MCF 10A (cell line): ENCODE measurements at regions of chr17 and their contacts with region 1.

Region 1: GRCh38 chr17:21511363-21512198 is 135.4 kb downstream of the KCNJ12 start:
- DNase-seq: peak; percentile 68
- H3K4me3 Mint-ChIP-seq: no peak overlapping the region
- H3K27ac Mint-ChIP-seq: no peak overlapping the region
- H3K4me1 Mint-ChIP-seq: no peaks in the 10 kb centered on the region
- H3K27me3 Mint-ChIP-seq: peaks cover 15% of the 10 kb centered on the region
- CTCF ChIP-seq: peak; percentile 74

Region 2: GRCh38 chr17:21119247-21119918 is 392.2 kb before region 1 on chr17:
- CTCF ChIA-PET with region 1: interaction called, 11 read pairs
- POLR2A ChIA-PET with region 1: no interaction called
- intact Hi-C with region 1: loop called (anchors 2 kb)
- DNase-seq: peak; percentile 68
- H3K4me3 Mint-ChIP-seq: no peak overlapping the region
- H3K27ac Mint-ChIP-seq: no peak overlapping the region
- H3K4me1 Mint-ChIP-seq: peaks cover 6% of the 10 kb centered on the region
- H3K27me3 Mint-ChIP-seq: no peaks in the 10 kb centered on the region
- CTCF ChIP-seq: peak; percentile 82

Region 3: GRCh38 chr17:21275579-21276263 is 235.9 kb before region 1 on chr17:
- CTCF ChIA-PET with region 1: interaction called, 52 read pairs
- POLR2A ChIA-PET with region 1: no interaction called
- intact Hi-C with region 1: loop called (anchors 1 kb)
- DNase-seq: peak; percentile 80
- H3K4me3 Mint-ChIP-seq: peak overlapping the region; percentile 77
- H3K27ac Mint-ChIP-seq: peak overlapping the region; percentile 75
- H3K4me1 Mint-ChIP-seq: peaks cover 19% of the 10 kb centered on the region
- H3K27me3 Mint-ChIP-seq: no peaks in the 10 kb centered on the region
- CTCF ChIP-seq: no peak

Region 4: GRCh38 chr17:21318439-21318838 is 193.1 kb before region 1 on chr17:
- CTCF ChIA-PET with region 1: no interaction called
- POLR2A ChIA-PET with region 1: no interaction called
- intact Hi-C with region 1: loop called (anchors 10 kb)
- DNase-seq: no peak
- H3K4me3 Mint-ChIP-seq: no peak overlapping the region
- H3K27ac Mint-ChIP-seq: no peak overlapping the region
- H3K4me1 Mint-ChIP-seq: no peaks in the 10 kb centered on the region
- H3K27me3 Mint-ChIP-seq: no peaks in the 10 kb centered on the region
- CTCF ChIP-seq: no peak

Region 5: DNA sequence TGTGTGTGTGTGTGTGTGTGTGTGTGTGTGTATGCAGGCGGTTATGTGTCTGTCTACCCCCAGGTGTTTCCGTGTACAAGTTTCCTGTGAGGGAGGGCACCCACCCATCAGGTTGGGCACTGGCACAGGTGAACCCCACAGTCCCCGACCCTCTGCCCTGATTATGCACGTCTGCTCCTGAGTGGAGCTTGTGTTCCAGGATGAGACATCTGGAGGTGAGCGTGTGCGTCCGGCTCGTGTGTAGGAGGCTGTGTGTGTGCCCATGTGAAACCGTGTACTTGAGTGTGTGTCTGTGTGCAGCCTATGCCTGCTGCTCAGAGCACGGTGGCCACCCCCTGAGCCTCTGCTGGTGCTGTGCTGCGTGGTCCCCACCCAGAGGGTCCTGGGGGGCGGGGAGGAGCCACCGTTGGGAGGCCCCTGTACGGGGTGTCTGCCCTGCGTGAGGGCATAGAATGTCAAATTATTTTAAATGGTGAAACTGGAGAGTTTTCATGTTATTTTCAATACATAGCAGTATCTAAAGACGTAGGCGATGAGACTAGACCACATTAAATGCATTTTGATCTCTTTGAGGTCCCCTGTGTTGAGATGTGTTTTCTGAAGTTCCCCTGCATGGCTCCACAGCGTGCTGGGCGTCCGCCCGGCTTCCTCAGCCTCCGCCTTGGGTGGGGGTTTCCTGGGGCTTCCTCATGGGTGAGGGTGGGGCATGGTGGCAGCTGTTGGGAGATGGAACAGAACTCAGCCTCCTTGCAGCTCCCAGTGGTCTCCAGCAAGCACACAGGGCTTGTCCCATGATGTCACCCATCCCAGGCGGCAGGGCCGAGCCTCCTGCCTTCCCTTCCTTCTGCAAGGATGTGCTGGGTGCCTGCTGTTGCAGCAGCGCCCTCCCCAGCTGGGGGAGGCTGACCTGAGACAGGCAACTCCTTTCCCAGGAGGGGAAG is 92.0 kb before region 1 on chr17:
- CTCF ChIA-PET with region 1: no interaction called
- POLR2A ChIA-PET with region 1: no interaction called
- intact Hi-C with region 1: no loop called
- DNase-seq: no peak
- H3K4me3 Mint-ChIP-seq: no peak overlapping the region
- H3K27ac Mint-ChIP-seq: no peak overlapping the region
- H3K4me1 Mint-ChIP-seq: no peaks in the 10 kb centered on the region
- H3K27me3 Mint-ChIP-seq: no peaks in the 10 kb centered on the region
- CTCF ChIP-seq: no peak

Region 6: DNA sequence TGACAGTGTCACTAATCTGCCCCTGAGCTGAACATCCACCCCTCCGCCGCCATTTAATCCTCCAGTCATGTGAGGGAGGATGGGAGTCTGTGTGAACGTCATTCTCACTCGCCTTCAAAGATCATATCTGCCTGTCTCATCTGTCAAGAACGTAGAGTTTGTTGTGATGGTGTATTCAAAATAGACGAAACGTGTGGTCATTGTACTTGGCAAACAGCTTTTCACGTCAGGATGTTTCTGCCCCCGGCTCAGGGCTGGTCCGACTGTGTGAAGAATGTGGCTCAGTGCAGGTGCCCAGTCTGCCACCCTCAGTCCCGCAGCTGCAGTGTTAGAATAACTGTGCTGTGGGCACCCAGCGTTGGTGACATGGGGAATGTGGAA is 12.6 kb after region 1 on chr17:
- CTCF ChIA-PET with region 1: interaction called, 43 read pairs
- POLR2A ChIA-PET with region 1: no interaction called
- intact Hi-C with region 1: no loop called
- DNase-seq: no peak
- H3K4me3 Mint-ChIP-seq: no peak overlapping the region
- H3K27ac Mint-ChIP-seq: no peak overlapping the region
- H3K4me1 Mint-ChIP-seq: no peaks in the 10 kb centered on the region
- H3K27me3 Mint-ChIP-seq: no peaks in the 10 kb centered on the region
- CTCF ChIP-seq: no peak

Region 7: DNA sequence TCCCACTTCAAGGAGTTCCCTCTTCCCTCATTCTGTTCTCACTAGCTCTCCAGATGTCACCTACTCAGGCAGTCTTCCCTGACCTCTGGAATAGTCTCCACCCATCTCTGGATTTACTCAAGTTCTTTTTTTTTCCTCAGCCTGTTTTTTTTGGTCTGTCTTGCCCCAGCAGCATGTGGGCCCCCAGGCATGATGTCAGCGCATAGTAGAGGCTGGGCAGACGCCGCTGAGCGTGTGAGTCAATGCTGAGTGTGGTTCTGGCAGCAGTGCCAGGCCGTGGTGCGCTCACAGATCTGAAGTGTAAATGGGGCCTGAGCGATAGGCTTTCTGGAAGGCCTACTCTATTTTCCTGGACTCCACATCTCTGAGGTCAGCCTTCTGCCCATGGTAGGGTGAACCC is 178.0 kb after region 1 on chr17:
- CTCF ChIA-PET with region 1: no interaction called
- POLR2A ChIA-PET with region 1: no interaction called
- intact Hi-C with region 1: no loop called
- DNase-seq: peak; percentile 72
- H3K4me3 Mint-ChIP-seq: no peak overlapping the region
- H3K27ac Mint-ChIP-seq: no peak overlapping the region
- H3K4me1 Mint-ChIP-seq: peaks cover 6% of the 10 kb centered on the region
- H3K27me3 Mint-ChIP-seq: no peaks in the 10 kb centered on the region
- CTCF ChIP-seq: no peak

Region 8: GRCh38 chr17:22507823-22508222 is 996.2 kb after region 1 on chr17:
- CTCF ChIA-PET with region 1: no interaction called
- POLR2A ChIA-PET with region 1: no interaction called
- intact Hi-C with region 1: no loop called
- DNase-seq: no peak
- H3K4me3 Mint-ChIP-seq: no peak overlapping the region
- H3K27ac Mint-ChIP-seq: no peak overlapping the region
- H3K4me1 Mint-ChIP-seq: no peaks in the 10 kb centered on the region
- H3K27me3 Mint-ChIP-seq: no peaks in the 10 kb centered on the region
- CTCF ChIP-seq: no peak